Adrenal gland (tissue), 19 donors: ENCODE measurements at regions of chr3 and their contacts with region 1.

Region 1: GRCh38 chr3:43549626-43550290 is 72.1 kb downstream of the ANO10 start:
- DNase-seq: no peak
- H3K4me3 ChIP-seq: no peak overlapping the region
- H3K27ac ChIP-seq: no peak overlapping the region
- H3K4me1 ChIP-seq: no peaks in the 10 kb centered on the region
- H3K27me3 ChIP-seq: no peaks in the 10 kb centered on the region
- CTCF ChIP-seq: no peak
- POLR2A ChIP-seq: no peak

Region 2: DNA sequence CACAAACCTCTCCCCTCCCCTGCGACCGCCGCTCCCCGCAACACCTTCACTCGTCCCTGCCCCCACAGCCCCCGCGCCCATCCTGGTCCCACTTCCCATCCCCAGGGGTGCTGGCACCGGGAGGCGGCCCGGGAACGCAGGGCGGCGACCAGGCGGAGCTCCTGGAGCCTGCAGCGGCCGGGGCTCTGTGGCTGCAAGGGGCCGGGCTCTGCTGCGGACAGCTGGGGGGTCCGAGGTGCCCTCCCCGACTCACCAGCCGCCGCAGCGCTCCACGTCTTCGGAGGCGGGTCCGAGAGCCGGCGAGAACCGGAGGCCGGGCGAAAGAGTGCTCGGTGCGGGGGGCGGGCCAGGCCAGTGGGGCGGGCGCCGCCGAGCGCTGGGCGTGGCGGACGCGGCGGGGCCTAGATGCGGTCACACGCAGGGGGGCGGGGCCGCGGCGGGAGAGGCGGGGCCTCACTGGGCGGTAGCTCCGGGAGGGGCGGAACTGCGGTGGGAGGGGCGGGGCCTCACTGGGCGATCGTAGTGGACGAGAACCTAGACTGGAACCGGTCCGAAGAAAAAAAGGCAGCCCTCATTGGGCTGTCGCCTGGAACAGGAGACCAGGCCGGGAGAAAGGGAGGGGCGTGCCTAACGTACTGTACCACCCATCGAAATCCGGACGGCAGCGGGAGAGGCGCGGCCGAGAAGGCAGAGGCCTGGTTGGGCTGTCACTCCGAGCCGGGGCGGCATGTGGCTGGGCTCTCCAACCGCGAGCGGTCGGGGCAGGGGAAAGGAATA is 72.1 kb after region 1 on chr3 and contains the start of gene ANO10:
- intact Hi-C with region 1: no loop called
- DNase-seq: peak; percentile 99 to 100 (median 99)
- H3K4me3 ChIP-seq: peak within 1 kb of the TSS; percentile 83 to 99 (median 94)
- H3K27ac ChIP-seq: peak within 1 kb of the TSS in 4 of 5 donors; percentile 16 to 83 (median 78)
- H3K4me1 ChIP-seq: peaks cover 0 to 10% of the 10 kb centered on the region in 2 donors
- H3K27me3 ChIP-seq: no peaks in the 10 kb centered on the region
- CTCF ChIP-seq: peak in 1 of 6 experiments; percentile 8
- POLR2A ChIP-seq: peak; percentile 55 to 66
- total RNA-seq, gene ANO10: 11.0 to 32.9 (median 23.5) TPM

Region 3: GRCh38 chr3:43727930-43728329 is 178.2 kb after region 1 on chr3:
- intact Hi-C with region 1: no loop called
- DNase-seq: no peak
- H3K4me3 ChIP-seq: no peak overlapping the region
- H3K27ac ChIP-seq: no peak overlapping the region
- H3K4me1 ChIP-seq: peaks cover 0 to 7% of the 10 kb centered on the region in 2 donors
- H3K27me3 ChIP-seq: no peaks in the 10 kb centered on the region
- CTCF ChIP-seq: no peak
- POLR2A ChIP-seq: no peak

Region 4: GRCh38 chr3:43742920-43743319 is 193.2 kb after region 1 on chr3:
- intact Hi-C with region 1: loop called in 1 of 2 experiments (anchors 5 kb)
- DNase-seq: peak in 3 of 7 donors; percentile 43 to 60 (median 47)
- H3K4me3 ChIP-seq: no peak overlapping the region
- H3K27ac ChIP-seq: peak overlapping the region in 1 of 5 donors; percentile 17
- H3K4me1 ChIP-seq: peaks cover 0 to 8% of the 10 kb centered on the region in 2 donors
- H3K27me3 ChIP-seq: no peaks in the 10 kb centered on the region
- CTCF ChIP-seq: peak in 3 of 6 experiments; percentile 7 to 21 (median 11)
- POLR2A ChIP-seq: no peak

Region 5: DNA sequence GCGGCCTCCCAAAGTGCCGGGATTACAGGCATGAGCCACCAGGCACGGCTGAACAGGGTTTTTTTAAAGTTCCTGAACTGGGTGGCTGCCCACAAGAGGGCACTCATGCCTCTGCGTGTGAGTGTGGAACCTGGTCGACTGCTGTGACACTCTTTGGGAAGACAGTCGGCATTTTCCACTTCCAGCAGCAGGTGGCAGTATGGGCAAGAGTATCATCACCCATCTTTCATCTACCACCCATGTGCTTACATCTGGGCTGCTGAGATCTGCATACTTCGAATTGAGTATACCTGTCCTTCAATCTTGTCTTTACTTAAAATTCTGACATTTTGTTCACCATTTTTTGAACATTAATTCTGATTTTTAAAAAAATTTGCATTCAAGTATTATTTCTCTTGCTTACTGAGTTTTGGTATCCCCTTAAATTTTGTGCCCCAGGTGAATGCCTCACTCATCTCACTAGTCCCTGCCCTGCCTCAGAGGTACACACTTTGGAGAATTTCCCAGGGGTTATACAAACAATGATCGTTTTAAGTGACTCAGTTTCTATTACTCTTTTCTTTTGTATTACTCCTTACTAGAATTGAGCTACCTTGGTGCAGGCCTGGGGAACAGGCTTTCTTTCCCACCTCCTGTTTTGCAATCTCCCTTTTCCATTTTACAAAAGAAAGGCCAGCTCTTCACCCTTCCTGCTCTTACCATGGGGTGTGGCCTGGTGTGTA is 1488.1 kb after region 1 on chr3:
- intact Hi-C with region 1: no loop called
- DNase-seq: peak; percentile 92 to 99 (median 96)
- H3K4me3 ChIP-seq: peak overlapping the region in 1 of 4 donors; percentile 13
- H3K27ac ChIP-seq: no peak overlapping the region
- H3K4me1 ChIP-seq: peaks cover 0 to 30% of the 10 kb centered on the region in 2 donors
- H3K27me3 ChIP-seq: no peaks in the 10 kb centered on the region
- CTCF ChIP-seq: peak; percentile 77 to 99 (median 98)
- POLR2A ChIP-seq: no peak